Psoas muscle (tissue), 8 donors: ENCODE measurements at regions of chr1 and their contacts with region 1.

Region 1: GRCh38 chr1:238457610-238458009 is 566.9 kb upstream of the ZP4 start:
- DNase-seq: no peak
- ATAC-seq: no peak
- H3K4me3 ChIP-seq: no peak overlapping the region
- H3K27ac ChIP-seq: no peak overlapping the region
- H3K4me1 ChIP-seq: no peaks in the 10 kb centered on the region
- H3K27me3 ChIP-seq: no peaks in the 10 kb centered on the region
- CTCF ChIP-seq: no peak

Region 2: GRCh38 chr1:238501290-238501689 is 43.7 kb after region 1 on chr1:
- intact Hi-C with region 1: no loop called
- DNase-seq: no peak
- ATAC-seq: no peak
- H3K4me3 ChIP-seq: no peak overlapping the region
- H3K27ac ChIP-seq: no peak overlapping the region
- H3K4me1 ChIP-seq: no peaks in the 10 kb centered on the region
- H3K27me3 ChIP-seq: no peaks in the 10 kb centered on the region
- CTCF ChIP-seq: no peak

Region 3: DNA sequence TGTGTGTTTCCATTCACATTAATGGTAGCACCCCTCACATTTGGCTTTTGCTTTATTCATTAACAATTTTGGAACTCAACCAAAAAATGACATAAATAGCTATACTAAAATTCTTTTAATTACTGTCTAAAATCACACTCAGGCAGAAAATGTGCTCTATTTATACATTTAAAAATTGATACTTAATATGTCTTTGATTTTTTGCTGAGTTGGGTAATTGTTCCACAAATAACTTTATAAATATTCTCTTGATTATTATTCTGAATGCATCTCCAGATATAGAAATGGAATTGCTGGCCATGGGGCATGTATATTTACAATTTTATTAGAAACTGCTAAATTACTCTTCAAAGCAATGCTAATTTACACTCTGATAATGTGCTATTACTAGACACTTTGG is 270.1 kb after region 1 on chr1:
- intact Hi-C with region 1: loop called in 1 of 2 experiments (anchors 5 kb)
- DNase-seq: no peak
- ATAC-seq: no peak
- H3K4me3 ChIP-seq: no peak overlapping the region
- H3K27ac ChIP-seq: no peak overlapping the region
- H3K4me1 ChIP-seq: no peaks in the 10 kb centered on the region
- H3K27me3 ChIP-seq: no peaks in the 10 kb centered on the region
- CTCF ChIP-seq: no peak